ENCODE measurements at regions of chr3 and their contacts with region 1.

Region 1: GRCh38 chr3:32143849-32144757 is 37.7 kb downstream of the GPD1L start:
- DNase-seq: peak in 1 of 2 donors; percentile 36
- ATAC-seq: peak; percentile 83

Region 2: GRCh38 chr3:32018757-32019564 is 125.1 kb before region 1 on chr3:
- intact Hi-C with region 1: loop called in 1 of 2 experiments (anchors 5 kb)
- DNase-seq: no peak
- ATAC-seq: peak; percentile 79

Measured in left colon (tissue), 2 donors.